Prostate gland (tissue), 2 donors: ENCODE measurements at regions of chr13 and their contacts with region 1.

Region 1: GRCh38 chr13:30132623-30133553 is 174.5 kb downstream of the KATNAL1 start:
- DNase-seq: peak; percentile 97
- H3K4me3 ChIP-seq: no peak overlapping the region
- H3K27ac ChIP-seq: peak overlapping the region in 1 of 2 donors; percentile 30
- H3K4me1 ChIP-seq: no peaks in the 10 kb centered on the region
- H3K27me3 ChIP-seq: no peaks in the 10 kb centered on the region
- CTCF ChIP-seq: peak; percentile 81 to 96 (median 95)
- POLR2A ChIP-seq: no peak

Region 2: DNA sequence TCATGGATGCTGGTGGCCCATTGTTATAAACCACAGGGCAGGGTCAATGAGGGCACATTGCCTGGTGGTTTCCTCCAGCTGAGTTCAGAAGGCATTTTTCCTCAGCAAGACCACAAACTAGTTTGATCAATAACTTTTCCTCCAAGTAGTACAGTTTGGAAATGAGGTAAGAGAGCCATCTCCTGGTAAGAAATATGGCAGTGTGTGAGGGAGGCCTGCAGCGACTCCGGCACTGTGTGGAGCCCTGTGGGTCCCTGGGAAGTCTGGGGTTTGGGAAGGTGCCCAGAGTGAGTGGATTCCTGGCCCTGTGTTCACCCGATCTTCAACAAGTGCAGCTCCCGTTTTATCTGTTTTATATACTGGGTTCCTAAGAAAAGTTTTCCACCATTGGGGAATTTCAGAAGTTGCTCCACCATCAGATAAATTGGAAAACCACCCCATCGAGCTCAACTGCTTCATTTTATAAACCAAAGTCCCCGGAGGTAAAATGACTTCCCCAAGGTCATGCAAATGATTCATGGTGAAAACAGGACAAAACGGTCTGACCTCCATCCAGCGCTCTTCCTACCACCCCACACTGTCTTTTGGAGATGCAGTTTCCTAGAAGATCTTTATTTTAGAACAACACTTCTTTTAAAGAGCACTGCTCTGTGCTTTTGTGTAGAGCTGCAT is 26.0 kb after region 1 on chr13:
- intact Hi-C with region 1: loop called (anchors 2 kb)
- DNase-seq: no peak
- H3K4me3 ChIP-seq: no peak overlapping the region
- H3K27ac ChIP-seq: no peak overlapping the region
- H3K4me1 ChIP-seq: no peaks in the 10 kb centered on the region
- H3K27me3 ChIP-seq: no peaks in the 10 kb centered on the region
- CTCF ChIP-seq: peak in 2 of 4 experiments; percentile 13 to 47
- POLR2A ChIP-seq: no peak

Region 3: GRCh38 chr13:30403115-30403855 is 270.4 kb after region 1 on chr13:
- intact Hi-C with region 1: loop called (anchors 5 kb)
- DNase-seq: peak; percentile 71
- H3K4me3 ChIP-seq: no peak overlapping the region
- H3K27ac ChIP-seq: peak overlapping the region; percentile 78 to 82
- H3K4me1 ChIP-seq: peaks cover 7% of the 10 kb centered on the region
- H3K27me3 ChIP-seq: no peaks in the 10 kb centered on the region
- CTCF ChIP-seq: no peak
- POLR2A ChIP-seq: no peak

Region 4: DNA sequence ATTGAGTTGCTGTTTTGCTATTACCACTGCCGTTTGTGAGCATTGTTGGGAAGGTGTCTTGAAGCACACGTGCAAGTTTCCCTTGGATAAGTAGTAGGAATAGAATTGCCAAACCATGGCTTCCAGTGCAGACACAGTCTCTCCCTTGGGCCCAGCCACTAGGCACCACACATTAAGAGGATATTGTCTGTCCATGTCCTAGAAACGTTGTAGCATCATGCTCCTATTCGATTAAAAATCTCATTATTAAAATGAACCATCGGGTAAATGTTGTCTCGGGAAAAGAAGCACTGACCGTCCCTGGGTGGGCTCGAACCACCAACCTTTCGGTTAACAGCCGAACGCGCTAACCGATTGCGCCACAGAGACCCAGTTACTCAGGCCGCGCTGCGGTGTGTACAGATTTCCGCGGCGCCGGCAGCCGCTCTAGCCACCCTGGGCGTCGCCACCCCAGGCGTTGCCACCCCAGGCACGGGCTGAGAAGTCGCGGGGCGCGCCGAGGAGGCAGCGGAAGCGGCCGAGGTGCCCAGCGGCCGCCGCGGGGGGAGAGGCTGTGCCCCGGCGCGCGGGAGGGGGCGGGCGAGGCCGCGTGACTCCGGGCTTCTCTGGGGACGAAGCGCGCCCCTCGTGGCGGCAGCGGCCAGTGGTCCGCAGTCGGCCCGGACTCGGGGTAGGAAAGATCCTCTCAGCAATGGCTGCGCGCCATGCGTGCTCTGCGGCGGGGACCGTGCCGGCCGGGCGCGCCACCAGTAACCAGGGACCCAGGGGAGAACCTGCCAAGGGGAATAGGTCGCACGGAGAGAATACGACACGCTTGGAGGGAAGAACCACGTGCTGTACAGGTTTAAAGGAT is 541.0 kb after region 1 on chr13:
- intact Hi-C with region 1: loop called (anchors 10 kb)
- DNase-seq: peak; percentile 84
- H3K4me3 ChIP-seq: peak overlapping the region; percentile 40 to 45
- H3K27ac ChIP-seq: peak overlapping the region; percentile 76 to 77
- H3K4me1 ChIP-seq: no peaks in the 10 kb centered on the region
- H3K27me3 ChIP-seq: no peaks in the 10 kb centered on the region
- CTCF ChIP-seq: peak; percentile 45 to 82 (median 62)
- POLR2A ChIP-seq: peak; percentile 24

Region 5: GRCh38 chr13:30865123-30866049 is 732.5 kb after region 1 on chr13:
- intact Hi-C with region 1: loop called (anchors 5 kb)
- DNase-seq: peak; percentile 81
- H3K4me3 ChIP-seq: no peak overlapping the region
- H3K27ac ChIP-seq: peak overlapping the region; percentile 66 to 75
- H3K4me1 ChIP-seq: peaks cover 2% of the 10 kb centered on the region
- H3K27me3 ChIP-seq: no peaks in the 10 kb centered on the region
- CTCF ChIP-seq: peak; percentile 63 to 94 (median 79)
- POLR2A ChIP-seq: peak; percentile 9

Region 6: DNA sequence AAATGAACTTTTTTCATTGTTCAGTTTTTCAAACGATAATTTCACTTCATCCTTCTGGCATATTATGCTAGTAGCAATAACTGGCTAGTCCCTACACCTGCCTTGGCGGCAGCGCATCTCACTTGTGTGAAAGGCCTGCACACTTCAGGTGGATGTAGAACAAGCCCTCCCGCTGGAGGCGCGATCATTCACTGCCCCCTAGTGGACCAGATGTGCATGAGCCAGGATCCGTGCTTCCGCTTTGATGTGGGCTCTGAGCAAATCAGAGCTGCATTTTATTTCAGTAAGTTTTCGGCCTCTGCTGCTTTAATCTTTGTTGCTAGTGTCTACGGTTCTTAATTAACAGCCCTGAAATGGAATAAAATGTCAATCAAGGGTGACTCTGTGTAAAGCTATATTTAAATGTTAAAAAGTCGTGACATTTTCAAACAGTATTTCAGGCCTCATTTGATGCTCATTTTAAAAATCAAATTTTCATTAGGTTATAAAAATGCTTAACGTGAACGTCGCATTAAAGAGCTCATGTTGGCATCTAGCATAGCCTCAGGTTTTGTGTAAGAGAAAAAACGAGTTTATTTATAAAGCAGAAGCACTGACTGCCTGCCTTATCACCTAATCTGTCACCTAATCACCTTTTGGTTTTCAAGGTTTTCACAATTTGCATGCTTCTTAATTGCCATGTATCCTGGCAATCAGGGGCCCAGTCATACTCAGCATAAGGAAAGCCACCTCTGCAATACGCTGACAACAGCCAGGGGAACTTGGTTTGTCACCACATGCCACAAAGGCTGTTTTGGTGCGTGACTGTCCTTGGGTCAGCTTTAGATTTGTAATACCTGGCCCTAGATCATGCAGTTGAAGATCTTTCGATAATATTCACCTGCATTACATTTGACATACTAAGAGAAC is 911.7 kb after region 1 on chr13:
- intact Hi-C with region 1: loop called (anchors 10 kb)
- DNase-seq: peak; percentile 74
- H3K4me3 ChIP-seq: no peak overlapping the region
- H3K27ac ChIP-seq: no peak overlapping the region
- H3K4me1 ChIP-seq: no peaks in the 10 kb centered on the region
- H3K27me3 ChIP-seq: no peaks in the 10 kb centered on the region
- CTCF ChIP-seq: peak; percentile 82 to 89 (median 88)
- POLR2A ChIP-seq: no peak